OCI-LY7 (cell line): ENCODE measurements at regions of chr1 and their contacts with region 1.

Region 1: GRCh38 chr1:57492586-57493226 is 68.8 kb upstream of the DAB1 start:
- DNase-seq: no peak
- H3K4me3 ChIP-seq: no peak overlapping the region
- H3K27ac ChIP-seq: no peak overlapping the region
- H3K4me1 ChIP-seq: no peaks in the 10 kb centered on the region
- CTCF ChIP-seq: no peak

Region 2: GRCh38 chr1:57401671-57402070 is 91.0 kb before region 1 on chr1:
- CTCF ChIA-PET with region 1: interaction called, 10 read pairs
- POLR2A ChIA-PET with region 1: no interaction called
- intact Hi-C with region 1: no loop called
- DNase-seq: no peak
- H3K4me3 ChIP-seq: no peak overlapping the region
- H3K27ac ChIP-seq: no peak overlapping the region
- H3K4me1 ChIP-seq: no peaks in the 10 kb centered on the region
- CTCF ChIP-seq: no peak

Region 3: DNA sequence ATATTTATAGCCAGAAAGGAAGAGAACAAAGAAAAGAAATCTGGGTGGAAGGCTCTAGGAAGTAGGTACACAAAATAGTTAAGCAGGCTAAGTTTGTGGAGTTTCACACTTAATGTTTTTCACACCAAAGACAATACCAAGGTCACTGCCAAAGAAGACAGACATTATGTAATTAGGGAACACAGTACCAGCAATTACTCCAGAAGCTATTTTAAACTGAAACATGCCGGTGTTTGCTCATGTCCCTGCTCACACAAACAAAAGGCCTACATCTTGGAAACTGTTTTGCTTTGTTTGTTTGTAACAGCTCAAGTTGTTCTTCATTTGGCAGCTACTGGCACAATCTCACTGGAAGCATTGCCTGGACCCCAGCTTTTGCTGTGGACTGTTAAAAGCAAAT is 19.7 kb after region 1 on chr1:
- CTCF ChIA-PET with region 1: no interaction called
- POLR2A ChIA-PET with region 1: no interaction called
- intact Hi-C with region 1: no loop called
- DNase-seq: no peak
- H3K4me3 ChIP-seq: no peak overlapping the region
- H3K27ac ChIP-seq: no peak overlapping the region
- H3K4me1 ChIP-seq: no peaks in the 10 kb centered on the region
- CTCF ChIP-seq: no peak

Region 4: DNA sequence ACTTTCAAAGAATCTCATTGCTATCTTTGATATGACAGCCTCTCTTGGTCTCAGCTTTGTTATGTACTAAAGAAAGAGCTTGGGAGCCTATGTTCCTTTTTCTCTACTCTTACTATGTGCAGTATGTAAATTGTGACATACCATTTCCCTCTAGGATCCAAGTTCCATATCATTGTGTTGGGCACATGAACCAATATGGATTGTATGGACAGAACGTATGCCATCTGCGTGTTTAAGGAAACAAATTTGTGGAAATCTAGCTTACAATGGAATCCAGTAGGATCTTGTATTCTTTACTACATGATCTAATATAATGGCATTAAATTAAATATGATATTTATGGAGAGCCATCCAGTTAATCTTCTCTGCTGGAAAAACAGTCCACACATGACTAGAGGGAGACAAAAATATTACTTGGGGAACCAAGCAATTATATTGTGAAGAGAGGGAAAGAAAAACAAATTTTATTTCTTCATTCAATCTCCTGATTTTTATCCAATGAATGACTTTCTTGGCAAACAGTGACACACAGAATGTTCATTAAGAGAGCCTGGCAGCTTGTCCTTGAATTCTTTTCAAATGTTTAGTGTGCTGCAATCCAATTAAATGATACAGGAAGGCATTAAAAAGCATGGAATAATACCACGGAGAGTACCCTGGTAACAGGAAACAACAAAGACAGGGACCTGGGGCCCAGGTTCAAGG is 37.7 kb after region 1 on chr1:
- CTCF ChIA-PET with region 1: no interaction called
- POLR2A ChIA-PET with region 1: no interaction called
- intact Hi-C with region 1: no loop called
- DNase-seq: no peak
- H3K4me3 ChIP-seq: no peak overlapping the region
- H3K27ac ChIP-seq: no peak overlapping the region
- H3K4me1 ChIP-seq: no peaks in the 10 kb centered on the region
- CTCF ChIP-seq: no peak